Common myeloid progenitor, CD34-positive (primary cell): ENCODE measurements at regions of chr2 and their contacts with region 1.

Region 1: GRCh38 chr2:231411831-231412617 is 16.5 kb downstream of the B3GNT7 start:
- DNase-seq: peak; percentile 82 to 91 (median 89)
- H3K4me3 ChIP-seq: peak overlapping the region; percentile 18 to 78 (median 64)
- H3K27ac ChIP-seq: no peak overlapping the region
- H3K4me1 ChIP-seq: peaks cover 0 to 12% (median 6%) of the 10 kb centered on the region in 4 experiments
- H3K27me3 ChIP-seq: peaks cover 0 to 8% (median 5%) of the 10 kb centered on the region in 5 experiments

Region 2: DNA sequence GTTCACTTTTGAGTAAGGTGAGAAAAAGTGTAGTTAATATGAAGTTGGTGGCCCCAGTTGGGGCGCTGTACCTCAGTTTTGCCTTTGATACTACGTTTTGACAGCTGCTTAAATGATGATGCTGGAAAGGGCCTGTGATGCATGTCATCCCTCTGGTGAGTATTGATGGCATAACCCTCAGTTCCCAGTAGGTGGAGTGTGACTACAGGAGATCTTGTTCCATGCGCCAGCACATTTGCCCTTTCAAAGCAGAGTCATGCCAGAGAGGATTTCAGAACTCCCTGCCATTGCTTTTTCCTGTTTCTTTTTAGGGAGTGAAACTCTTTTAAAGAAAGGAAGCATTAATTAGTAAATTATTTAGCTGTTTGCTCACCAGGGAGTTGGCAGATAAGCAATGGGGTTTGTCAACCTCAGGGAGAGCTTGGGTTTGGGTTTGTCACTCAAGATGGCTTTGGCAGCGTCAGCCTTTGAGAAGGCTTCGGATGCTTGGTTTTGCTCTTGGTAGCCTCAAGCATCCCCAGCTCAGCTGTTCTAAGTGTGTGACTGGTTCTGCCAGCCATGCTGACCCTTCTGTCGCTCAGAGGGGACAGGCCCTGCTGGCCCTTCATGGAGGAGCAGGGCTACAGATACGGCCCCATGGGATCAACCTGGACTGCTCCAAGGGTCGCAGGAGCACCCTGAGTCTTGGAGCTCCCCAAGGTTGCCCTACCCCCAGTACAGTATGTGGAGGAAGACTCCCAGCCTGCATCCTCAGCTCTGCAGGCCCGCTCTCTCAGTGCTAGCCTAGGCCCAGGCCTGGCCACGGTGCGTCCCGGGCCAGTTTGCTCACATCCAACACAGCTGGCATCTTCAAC is 184.5 kb before region 1 on chr2:
- CTCF ChIA-PET with region 1: interaction called, 234 read pairs
- POLR2A ChIA-PET with region 1: interaction called, 3 read pairs
- DNase-seq: peak; percentile 82 to 91 (median 90)
- H3K4me3 ChIP-seq: no peak overlapping the region
- H3K27ac ChIP-seq: no peak overlapping the region
- H3K4me1 ChIP-seq: peaks cover 0 to 26% (median 22%) of the 10 kb centered on the region in 4 experiments
- H3K27me3 ChIP-seq: no peaks in the 10 kb centered on the region

Region 3: GRCh38 chr2:231245253-231246094 is 166.6 kb before region 1 on chr2:
- CTCF ChIA-PET with region 1: interaction called, 25 read pairs
- POLR2A ChIA-PET with region 1: no interaction called
- DNase-seq: peak; percentile 25 to 46 (median 44)
- H3K4me3 ChIP-seq: no peak overlapping the region
- H3K27ac ChIP-seq: no peak overlapping the region
- H3K4me1 ChIP-seq: peaks cover 0 to 10% (median 6%) of the 10 kb centered on the region in 4 experiments
- H3K27me3 ChIP-seq: no peaks in the 10 kb centered on the region

Region 4: GRCh38 chr2:231348173-231348572 is 63.9 kb before region 1 on chr2:
- CTCF ChIA-PET with region 1: no interaction called
- POLR2A ChIA-PET with region 1: no interaction called
- DNase-seq: no peak
- H3K4me3 ChIP-seq: no peak overlapping the region
- H3K27ac ChIP-seq: no peak overlapping the region
- H3K4me1 ChIP-seq: peaks cover 0 to 6% (median 2%) of the 10 kb centered on the region in 4 experiments
- H3K27me3 ChIP-seq: no peaks in the 10 kb centered on the region

Region 5: GRCh38 chr2:231387904-231388724 is 23.9 kb before region 1 on chr2:
- CTCF ChIA-PET with region 1: interaction called, 17 read pairs
- POLR2A ChIA-PET with region 1: no interaction called
- DNase-seq: peak; percentile 42 to 84 (median 78)
- H3K4me3 ChIP-seq: peak overlapping the region in 1 of 7 experiments; percentile 32
- H3K27ac ChIP-seq: no peak overlapping the region
- H3K4me1 ChIP-seq: peaks cover 6 to 51% (median 32%) of the 10 kb centered on the region in 4 experiments
- H3K27me3 ChIP-seq: no peaks in the 10 kb centered on the region

Region 6: DNA sequence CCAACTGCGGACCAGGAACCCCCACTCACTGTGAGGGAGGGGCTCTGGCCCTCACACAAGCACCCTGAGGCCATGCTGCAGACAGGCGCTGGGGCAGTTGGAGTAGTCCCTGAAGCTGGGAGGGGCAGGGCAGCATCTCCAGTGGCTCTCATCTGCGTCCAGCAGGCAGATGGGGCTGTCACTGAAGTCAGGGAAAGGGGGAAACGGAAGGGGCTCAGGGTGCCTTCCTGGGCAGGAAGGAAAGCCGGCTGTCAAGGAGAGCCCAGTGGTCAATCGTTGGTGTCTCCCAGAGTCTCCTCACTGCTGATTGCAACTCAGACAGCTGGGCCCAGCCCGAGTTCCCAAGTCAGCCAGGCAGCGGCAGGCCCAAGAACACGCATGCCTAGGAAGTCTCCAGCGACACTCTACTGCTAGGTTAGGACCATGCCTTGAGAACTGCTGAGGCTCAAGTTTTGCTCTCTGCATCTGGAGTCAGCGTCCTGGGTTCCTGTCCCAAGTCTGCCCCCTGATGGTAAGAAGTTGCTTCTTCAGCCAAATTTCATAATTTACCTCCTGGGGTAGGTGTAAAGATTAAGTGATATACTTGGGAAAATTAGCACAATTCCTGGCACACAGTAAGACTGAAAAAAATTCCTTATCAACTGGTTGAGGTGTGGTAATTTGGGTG is 145.7 kb after region 1 on chr2:
- CTCF ChIA-PET with region 1: no interaction called
- POLR2A ChIA-PET with region 1: no interaction called
- DNase-seq: peak; percentile 90 to 94 (median 92)
- H3K4me3 ChIP-seq: no peak overlapping the region
- H3K27ac ChIP-seq: no peak overlapping the region
- H3K4me1 ChIP-seq: peaks cover 7 to 37% (median 25%) of the 10 kb centered on the region in 4 experiments
- H3K27me3 ChIP-seq: no peaks in the 10 kb centered on the region